SK-N-SH (cell line): ENCODE measurements at regions of chr17 and their contacts with region 1.

Region 1: GRCh38 chr17:1122533-1123392 is 57.0 kb downstream of the ABR start:
- DNase-seq: peak; percentile 92
- H3K4me3 ChIP-seq: no peak overlapping the region; a peak in 1 of 4 replicates
- H3K27ac ChIP-seq: no peak overlapping the region
- H3K4me1 ChIP-seq: peaks cover 0 to 6% of the 10 kb centered on the region in 2 experiments; a peak in 1 of 4 replicates
- H3K27me3 ChIP-seq: no peaks in the 10 kb centered on the region
- CTCF ChIP-seq: peak; percentile 91
- EP300 ChIP-seq: no peak
- RAD21 ChIP-seq: peak; percentile 87

Region 2: DNA sequence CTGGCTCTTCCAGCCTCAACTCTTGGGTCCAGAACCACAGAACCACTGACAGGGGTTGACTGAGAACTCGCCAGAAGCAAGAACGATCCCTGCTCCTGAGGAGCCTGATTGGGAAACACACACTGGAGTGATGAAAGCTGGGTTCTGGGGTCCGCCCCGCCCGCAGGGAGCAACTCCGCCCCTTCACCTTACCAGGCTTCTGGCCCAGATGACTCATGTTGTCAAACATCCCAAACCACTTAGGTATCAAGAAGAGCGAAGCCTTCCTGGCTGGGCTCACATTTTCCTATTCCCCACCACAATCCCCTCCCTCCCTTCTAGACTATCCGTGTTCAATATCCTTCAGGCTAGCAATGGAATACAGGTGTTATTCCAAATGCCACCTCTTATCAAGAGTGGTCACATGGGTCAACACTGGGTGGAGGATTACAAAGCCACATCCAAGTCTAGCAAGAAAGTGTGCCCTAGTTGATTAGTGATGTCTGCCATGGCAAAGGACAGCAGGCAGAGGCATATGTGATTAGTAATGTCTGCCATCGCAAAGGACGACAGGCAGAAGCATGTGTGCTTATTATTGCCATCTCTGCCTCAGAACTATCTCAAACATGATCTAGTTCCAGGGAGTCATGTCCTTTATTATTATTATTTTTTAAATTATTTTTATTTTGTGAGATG is 55.3 kb before region 1 on chr17:
- CTCF ChIA-PET with region 1: no interaction called
- POLR2A ChIA-PET with region 1: no interaction called
- DNase-seq: no peak
- H3K4me3 ChIP-seq: no peak overlapping the region
- H3K27ac ChIP-seq: no peak overlapping the region
- H3K4me1 ChIP-seq: peaks cover 0 to 18% of the 10 kb centered on the region in 2 experiments; a peak in 1 of 4 replicates
- H3K27me3 ChIP-seq: no peaks in the 10 kb centered on the region
- CTCF ChIP-seq: no peak
- EP300 ChIP-seq: no peak
- RAD21 ChIP-seq: no peak

Region 3: DNA sequence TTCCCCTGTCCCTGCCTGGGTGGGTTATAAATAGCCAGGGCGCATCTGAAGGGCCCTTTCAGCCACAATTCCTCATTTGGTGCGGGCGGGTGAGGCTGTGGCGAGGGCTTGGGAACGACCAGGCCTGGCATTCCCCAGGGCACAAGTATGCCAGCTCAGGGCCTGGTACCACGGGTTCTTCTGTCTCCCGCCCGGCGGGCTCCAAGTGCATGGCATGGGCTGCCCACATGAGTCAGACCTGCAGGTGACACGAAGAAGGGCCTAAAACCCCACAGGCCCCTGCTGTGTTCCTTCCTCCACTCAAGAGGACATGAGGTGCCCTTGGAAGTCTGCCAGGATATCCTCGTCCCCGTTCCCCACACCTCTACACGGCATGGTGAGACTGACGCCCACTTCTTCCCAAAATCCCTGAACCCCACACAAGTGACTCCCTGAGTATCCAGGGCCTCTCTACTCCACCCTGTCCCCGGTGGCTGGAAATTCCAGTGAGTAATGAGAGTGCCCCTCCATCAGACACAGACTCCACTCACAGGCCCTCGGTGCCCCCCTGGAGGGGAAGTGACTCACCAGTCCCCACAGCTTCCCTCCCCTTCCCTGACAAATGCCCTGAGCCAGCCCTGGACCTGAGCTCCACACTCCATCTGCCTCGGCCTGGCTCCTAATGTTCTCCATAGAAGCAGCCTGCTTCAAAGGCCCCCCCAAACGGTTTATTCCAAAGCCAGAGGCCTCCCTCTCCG is 11.7 kb before region 1 on chr17:
- CTCF ChIA-PET with region 1: interaction called, 49 read pairs
- POLR2A ChIA-PET with region 1: no interaction called
- DNase-seq: peak; percentile 65
- H3K4me3 ChIP-seq: no peak overlapping the region; a peak in 1 of 4 replicates
- H3K27ac ChIP-seq: peak overlapping the region; percentile 82 to 98
- H3K4me1 ChIP-seq: peaks cover 45% of the 10 kb centered on the region in 2 experiments; a peak in 3 of 4 replicates
- H3K27me3 ChIP-seq: no peaks in the 10 kb centered on the region
- CTCF ChIP-seq: no peak
- EP300 ChIP-seq: peak in 1 of 2 experiments; percentile 74; a peak in 1 of 4 replicates
- RAD21 ChIP-seq: no peak

Region 4: DNA sequence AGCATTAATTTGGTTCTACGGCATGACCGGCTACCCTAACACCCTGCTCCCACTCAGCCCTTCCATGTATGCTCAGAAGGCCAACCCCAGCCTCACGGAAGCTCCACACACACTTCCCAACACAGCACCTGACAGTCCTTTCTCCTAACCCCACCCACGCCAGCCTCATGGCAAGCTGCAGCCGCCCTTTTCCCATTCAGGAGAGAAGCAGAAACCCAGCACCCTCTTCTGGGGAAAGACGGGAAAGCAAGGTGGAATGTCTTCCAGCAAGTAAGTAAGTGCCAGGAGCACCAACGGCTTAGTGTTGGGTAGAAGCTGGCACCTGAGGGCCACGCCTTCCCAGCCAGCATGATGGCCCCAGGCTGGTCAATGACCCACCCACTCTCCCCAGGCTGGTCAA is 24.9 kb after region 1 on chr17:
- CTCF ChIA-PET with region 1: interaction called, 71 read pairs
- POLR2A ChIA-PET with region 1: no interaction called
- DNase-seq: no peak
- H3K4me3 ChIP-seq: no peak overlapping the region; a peak in 1 of 4 replicates
- H3K27ac ChIP-seq: no peak overlapping the region
- H3K4me1 ChIP-seq: peaks cover 0 to 4% of the 10 kb centered on the region in 2 experiments; a peak in 1 of 4 replicates
- H3K27me3 ChIP-seq: no peaks in the 10 kb centered on the region
- CTCF ChIP-seq: peak; percentile 60
- EP300 ChIP-seq: no peak
- RAD21 ChIP-seq: peak; percentile 60

Region 5: GRCh38 chr17:1168533-1169220 is 45.9 kb after region 1 on chr17:
- CTCF ChIA-PET with region 1: interaction called, 15 read pairs
- POLR2A ChIA-PET with region 1: no interaction called
- DNase-seq: peak; percentile 52
- H3K4me3 ChIP-seq: no peak overlapping the region
- H3K27ac ChIP-seq: peak overlapping the region in 1 of 2 experiments; percentile 48; a peak in 2 of 4 replicates
- H3K4me1 ChIP-seq: peaks cover 0 to 19% of the 10 kb centered on the region in 2 experiments; a peak in 1 of 4 replicates
- H3K27me3 ChIP-seq: no peaks in the 10 kb centered on the region
- CTCF ChIP-seq: no peak
- EP300 ChIP-seq: no peak
- RAD21 ChIP-seq: no peak

Region 6: GRCh38 chr17:1186923-1187771 is 64.4 kb after region 1 on chr17:
- CTCF ChIA-PET with region 1: interaction called, 248 read pairs
- POLR2A ChIA-PET with region 1: interaction called, 3 read pairs
- DNase-seq: peak; percentile 93
- H3K4me3 ChIP-seq: peak overlapping the region in 1 of 2 experiments; percentile 12; a peak in 1 of 4 replicates
- H3K27ac ChIP-seq: no peak overlapping the region
- H3K4me1 ChIP-seq: peaks cover 0 to 16% of the 10 kb centered on the region in 2 experiments; a peak in 1 of 4 replicates
- H3K27me3 ChIP-seq: no peaks in the 10 kb centered on the region
- CTCF ChIP-seq: peak; percentile 95
- EP300 ChIP-seq: no peak
- RAD21 ChIP-seq: peak; percentile 80